GM12878 (cell line): ENCODE measurements at regions of chr5 and their contacts with region 1.

Region 1: GRCh38 chr5:132190161-132190817 is 37.4 kb downstream of the P4HA2 start:
- DNase-seq: no peak
- ATAC-seq: peak; percentile 100
- H3K4me3 ChIP-seq: no peak overlapping the region
- H3K27ac ChIP-seq: no peak overlapping the region
- H3K4me1 ChIP-seq: no peaks in the 10 kb centered on the region
- H3K27me3 ChIP-seq: no peaks in the 10 kb centered on the region
- CTCF ChIP-seq: peak; percentile 64 to 69 (median 65)
- EP300 ChIP-seq: no peak
- POLR2A ChIP-seq: no peak
- RAD21 ChIP-seq: peak; percentile 68

Region 2: DNA sequence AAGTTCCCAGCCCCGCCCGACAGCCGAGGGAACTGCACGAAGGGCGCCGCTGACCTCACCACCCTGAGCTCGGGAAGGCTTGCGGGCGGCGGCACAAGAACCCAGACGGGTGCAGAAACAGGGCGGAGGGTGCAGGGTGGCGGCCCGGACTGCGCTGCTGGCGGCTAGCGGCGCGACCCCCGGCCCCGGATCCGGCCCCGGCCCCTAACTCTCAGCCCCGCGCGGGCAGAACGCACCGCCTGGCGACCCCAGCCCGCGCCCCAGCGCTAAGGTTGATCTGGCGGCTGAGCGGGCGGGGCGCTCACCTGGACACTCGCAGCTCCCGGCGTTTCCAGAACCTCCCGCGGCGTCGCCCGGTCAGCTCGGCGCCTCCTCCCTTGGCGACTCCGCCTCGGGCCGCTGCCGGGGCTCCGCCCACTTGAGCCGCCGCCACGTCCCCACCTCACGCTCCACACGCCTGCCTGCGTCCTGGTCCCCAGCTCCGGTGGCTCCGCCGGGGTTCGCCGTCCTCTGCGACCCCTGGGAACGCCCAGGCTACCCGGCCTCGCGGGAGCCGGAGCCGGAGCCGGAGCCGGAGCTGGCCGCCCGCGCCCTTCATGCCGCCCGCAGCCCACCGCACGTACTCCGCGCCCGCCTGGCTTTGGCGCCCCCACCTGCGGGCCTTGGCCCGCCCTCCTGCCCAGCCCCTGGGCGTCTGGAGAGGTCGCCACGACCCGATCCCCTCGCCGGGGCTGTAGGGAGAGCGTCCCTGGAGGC is 37.4 kb after region 1 on chr5 and contains the start of gene P4HA2:
- CTCF ChIA-PET with region 1: interaction called, 12 read pairs
- POLR2A ChIA-PET with region 1: no interaction called
- RAD21 ChIA-PET with region 1: interaction called, 3 read pairs
- SMC1A ChIA-PET with region 1: interaction called, 5 read pairs
- in situ Hi-C with region 1: no loop called
- intact Hi-C with region 1: no loop called
- DNase-seq: no peak
- ATAC-seq: peak; percentile 96
- H3K4me3 ChIP-seq: peak within 1 kb of the TSS; percentile 75
- H3K27ac ChIP-seq: no peak within 1 kb of the TSS
- H3K4me1 ChIP-seq: peaks cover 10% of the 10 kb centered on the region
- H3K27me3 ChIP-seq: peaks cover 0 to 5% of the 10 kb centered on the region in 2 experiments; a peak in 2 of 4 replicates
- CTCF ChIP-seq: peak in 1 of 3 experiments; percentile 18; a peak in 1 of 6 replicates
- EP300 ChIP-seq: no peak
- POLR2A ChIP-seq: peak; percentile 68
- RAD21 ChIP-seq: no peak
- polyA plus RNA-seq, gene P4HA2: 9.1 to 10.6 TPM